AG04450 (cell line): ENCODE measurements at regions of chr2 and their contacts with region 1.

Region 1: DNA sequence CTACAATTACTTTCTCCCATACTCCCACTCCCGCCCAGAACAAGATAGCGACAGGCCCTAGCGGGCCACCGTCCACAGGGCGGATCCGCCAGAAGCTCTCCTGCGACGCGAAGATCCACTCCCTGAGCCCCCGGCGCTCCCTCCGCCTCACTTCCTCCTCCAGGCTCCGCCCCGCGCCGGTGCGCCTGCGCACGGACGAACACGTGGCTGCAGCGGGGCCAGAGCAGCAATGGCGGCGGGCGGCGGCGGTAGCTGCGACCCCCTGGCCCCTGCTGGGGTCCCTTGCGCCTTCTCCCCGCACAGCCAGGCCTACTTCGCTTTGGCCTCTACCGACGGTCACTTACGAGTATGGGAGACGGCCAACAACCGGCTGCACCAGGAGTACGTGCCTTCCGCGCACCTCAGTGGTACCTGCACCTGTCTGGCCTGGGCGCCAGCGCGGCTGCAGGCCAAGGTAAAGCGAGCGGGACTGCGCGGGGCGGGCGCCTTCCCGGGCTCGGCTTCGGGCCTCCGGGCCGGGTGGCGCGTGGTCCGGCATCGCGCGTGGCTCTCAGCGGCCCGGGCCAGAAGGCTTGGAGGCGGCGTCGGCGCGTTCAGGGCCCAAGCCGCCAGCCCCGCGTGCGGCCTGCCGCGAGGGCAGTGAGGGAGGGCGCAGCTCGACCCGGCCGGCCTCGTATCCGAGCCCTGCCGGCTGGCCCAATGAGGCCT is at the start of gene WDR43:
- DNase-seq: peak; percentile 98
- H3K4me3 ChIP-seq: peak within 1 kb of the TSS; percentile 100
- H3K27ac ChIP-seq: peak within 1 kb of the TSS; percentile 41
- H3K27me3 ChIP-seq: no peaks in the 10 kb centered on the region
- CTCF ChIP-seq: no peak
- polyA plus RNA-seq, gene WDR43: 67.2 and 95.5 TPM in 2 replicates

Region 2: GRCh38 chr2:28780496-28780895 is 114.1 kb before region 1 on chr2:
- CTCF ChIA-PET with region 1: no interaction called
- POLR2A ChIA-PET with region 1: no interaction called
- DNase-seq: no peak
- H3K4me3 ChIP-seq: no peak overlapping the region
- H3K27ac ChIP-seq: no peak overlapping the region
- H3K27me3 ChIP-seq: no peaks in the 10 kb centered on the region
- CTCF ChIP-seq: no peak

Region 3: DNA sequence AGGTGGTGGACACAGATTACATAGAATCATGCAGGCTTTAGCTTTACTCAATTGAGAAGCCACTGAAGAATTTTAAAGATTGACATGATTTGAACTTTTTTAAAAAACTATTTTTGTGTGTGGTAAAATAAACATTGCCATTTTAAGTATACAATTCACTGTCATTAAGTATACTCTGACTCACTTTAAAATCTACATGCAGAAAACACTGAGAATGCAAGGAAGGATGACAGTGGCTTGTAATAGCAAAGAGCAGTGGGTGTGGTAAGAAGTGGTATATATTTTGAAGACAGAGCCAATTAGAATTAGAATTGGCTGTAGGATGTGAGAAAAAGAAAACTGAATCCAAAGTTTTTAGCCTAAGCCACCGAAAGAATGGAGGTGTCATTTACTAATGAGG is 39.4 kb before region 1 on chr2:
- CTCF ChIA-PET with region 1: no interaction called
- POLR2A ChIA-PET with region 1: interaction called, 11 read pairs
- DNase-seq: no peak
- H3K4me3 ChIP-seq: no peak overlapping the region
- H3K27ac ChIP-seq: no peak overlapping the region
- H3K27me3 ChIP-seq: no peaks in the 10 kb centered on the region
- CTCF ChIP-seq: no peak

Region 4: GRCh38 chr2:28870146-28870891 is 24.3 kb before region 1 on chr2 and contains the start of gene TRMT61B:
- CTCF ChIA-PET with region 1: no interaction called
- POLR2A ChIA-PET with region 1: interaction called, 21 read pairs
- DNase-seq: peak; percentile 81
- H3K4me3 ChIP-seq: peak within 1 kb of the TSS; percentile 89
- H3K27ac ChIP-seq: peak within 1 kb of the TSS; percentile 65
- H3K27me3 ChIP-seq: peaks cover 3% of the 10 kb centered on the region
- CTCF ChIP-seq: no peak
- polyA plus RNA-seq, gene TRMT61B: 10.5 and 16.8 TPM in 2 replicates

Region 5: GRCh38 chr2:28917616-28918112 is 23.0 kb after region 1 on chr2:
- CTCF ChIA-PET with region 1: no interaction called
- POLR2A ChIA-PET with region 1: no interaction called
- DNase-seq: no peak
- H3K4me3 ChIP-seq: no peak overlapping the region
- H3K27ac ChIP-seq: no peak overlapping the region
- H3K27me3 ChIP-seq: no peaks in the 10 kb centered on the region
- CTCF ChIP-seq: no peak

Region 6: GRCh38 chr2:28944535-28945248 is 50.1 kb after region 1 on chr2:
- CTCF ChIA-PET with region 1: no interaction called
- POLR2A ChIA-PET with region 1: no interaction called
- DNase-seq: no peak
- H3K4me3 ChIP-seq: no peak overlapping the region
- H3K27ac ChIP-seq: no peak overlapping the region
- H3K27me3 ChIP-seq: no peaks in the 10 kb centered on the region
- CTCF ChIP-seq: no peak